Caco-2 (cell line): ENCODE measurements at regions of chr1 and their contacts with region 1.

Region 1: DNA sequence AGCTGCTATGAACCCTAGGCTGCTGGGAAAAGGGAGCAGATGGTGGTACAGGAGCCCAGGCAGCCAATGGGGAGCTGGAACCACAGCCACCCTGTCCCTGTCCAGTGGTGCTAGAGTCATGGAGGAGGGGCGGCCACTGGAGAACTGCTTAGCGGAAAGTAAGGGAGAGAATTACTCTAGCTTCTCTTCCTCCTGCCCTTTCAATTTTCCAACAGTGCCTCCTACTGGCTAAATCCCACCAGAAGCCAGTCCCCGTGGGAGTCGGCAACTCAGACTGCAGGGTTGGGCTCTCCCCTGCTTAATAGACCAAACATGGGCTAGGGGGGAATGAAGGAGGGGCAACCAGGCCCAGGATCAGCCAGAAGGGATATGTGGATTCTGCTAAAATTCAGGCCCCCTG is 154.5 kb downstream of the ACTL8 start:
- DNase-seq: no peak
- H3K4me3 ChIP-seq: no peak overlapping the region
- H3K4me3 Mint-ChIP-seq: no peak overlapping the region
- H3K27ac Mint-ChIP-seq: no peak overlapping the region
- H3K4me1 ChIP-seq: no peaks in the 10 kb centered on the region
- H3K4me1 Mint-ChIP-seq: no peaks in the 10 kb centered on the region
- H3K27me3 ChIP-seq: no peaks in the 10 kb centered on the region
- H3K27me3 Mint-ChIP-seq: peaks cover 14% of the 10 kb centered on the region
- CTCF ChIP-seq: no peak

Region 2: DNA sequence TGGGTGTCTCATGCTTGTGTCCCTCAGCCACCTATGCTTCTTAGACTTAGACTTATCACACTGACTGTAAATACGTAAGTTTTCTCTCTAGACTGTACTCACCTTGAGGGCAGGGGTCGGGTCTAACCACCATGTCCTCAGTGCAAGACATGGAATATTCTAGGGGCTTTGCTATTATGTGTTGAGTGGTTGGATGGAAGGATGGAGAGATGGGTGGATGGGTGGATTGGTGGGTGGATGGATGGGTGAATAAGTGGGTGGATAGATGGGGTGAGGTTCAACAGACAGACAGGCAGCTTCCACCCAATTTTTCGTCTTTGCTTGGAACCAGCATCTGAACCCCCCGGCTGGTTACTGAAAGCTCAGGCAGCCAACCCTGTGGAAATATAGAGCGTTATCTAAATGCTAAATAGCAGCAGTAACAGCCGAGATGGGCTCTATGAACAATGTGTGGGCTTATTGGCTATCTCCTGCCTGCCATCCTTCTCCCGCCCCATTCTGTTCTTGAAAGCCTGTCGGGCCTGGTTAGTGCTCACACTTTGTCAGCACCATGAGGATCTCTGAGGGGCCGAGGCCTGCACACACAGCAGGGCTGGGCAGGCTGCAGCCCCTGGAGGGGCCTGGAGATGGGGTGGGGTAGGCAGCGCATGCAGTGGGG is 23.8 kb before region 1 on chr1:
- CTCF ChIA-PET with region 1: interaction called, 11 read pairs
- POLR2A ChIA-PET with region 1: no interaction called
- intact Hi-C with region 1: no loop called
- DNase-seq: no peak
- H3K4me3 ChIP-seq: no peak overlapping the region
- H3K4me3 Mint-ChIP-seq: no peak overlapping the region
- H3K27ac Mint-ChIP-seq: no peak overlapping the region
- H3K4me1 ChIP-seq: no peaks in the 10 kb centered on the region
- H3K4me1 Mint-ChIP-seq: no peaks in the 10 kb centered on the region
- H3K27me3 ChIP-seq: no peaks in the 10 kb centered on the region
- H3K27me3 Mint-ChIP-seq: peaks cover 21% of the 10 kb centered on the region
- CTCF ChIP-seq: no peak

Region 3: GRCh38 chr1:17895986-17896385 is 13.6 kb before region 1 on chr1:
- CTCF ChIA-PET with region 1: no interaction called
- POLR2A ChIA-PET with region 1: no interaction called
- intact Hi-C with region 1: no loop called
- DNase-seq: no peak
- H3K4me3 ChIP-seq: no peak overlapping the region
- H3K4me3 Mint-ChIP-seq: no peak overlapping the region
- H3K27ac Mint-ChIP-seq: no peak overlapping the region
- H3K4me1 ChIP-seq: no peaks in the 10 kb centered on the region
- H3K4me1 Mint-ChIP-seq: no peaks in the 10 kb centered on the region
- H3K27me3 ChIP-seq: no peaks in the 10 kb centered on the region
- H3K27me3 Mint-ChIP-seq: peaks cover 20% of the 10 kb centered on the region
- CTCF ChIP-seq: no peak

Region 4: GRCh38 chr1:17933971-17934370 is 24.3 kb after region 1 on chr1:
- CTCF ChIA-PET with region 1: no interaction called
- POLR2A ChIA-PET with region 1: no interaction called
- intact Hi-C with region 1: no loop called
- DNase-seq: no peak
- H3K4me3 ChIP-seq: no peak overlapping the region
- H3K4me3 Mint-ChIP-seq: no peak overlapping the region
- H3K27ac Mint-ChIP-seq: no peak overlapping the region
- H3K4me1 ChIP-seq: 0 out of 2 replicates have a peak, but pooled peaks cover 8% of the 10 kb centered on the region
- H3K4me1 Mint-ChIP-seq: peaks cover 13% of the 10 kb centered on the region
- H3K27me3 ChIP-seq: no peaks in the 10 kb centered on the region
- H3K27me3 Mint-ChIP-seq: peaks cover 5% of the 10 kb centered on the region
- CTCF ChIP-seq: no peak

Region 5: DNA sequence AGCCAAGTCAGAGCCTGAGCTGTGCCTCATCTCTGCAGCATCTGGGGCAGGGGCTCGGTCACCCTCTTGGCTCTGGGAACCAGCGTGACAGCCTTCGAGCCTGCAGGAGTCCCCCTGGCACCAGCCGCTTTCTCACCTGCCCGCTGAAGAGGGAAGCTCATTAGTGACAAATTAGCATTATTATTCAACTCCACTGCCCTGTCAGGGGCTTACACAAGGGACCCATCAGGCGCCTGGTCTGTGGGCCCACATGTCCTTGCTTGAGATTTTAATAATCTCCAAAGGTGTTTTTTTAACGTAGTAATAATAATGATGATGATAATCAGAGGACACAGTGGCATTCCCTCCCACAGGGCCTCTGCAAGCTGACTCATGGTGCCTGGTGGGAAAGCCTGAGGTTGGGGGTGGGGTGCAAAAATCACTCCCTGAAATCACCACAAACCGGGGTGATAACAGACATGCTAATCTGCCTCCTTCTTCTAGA is 99.9 kb after region 1 on chr1:
- CTCF ChIA-PET with region 1: no interaction called
- POLR2A ChIA-PET with region 1: no interaction called
- intact Hi-C with region 1: no loop called
- DNase-seq: no peak
- H3K4me3 ChIP-seq: no peak overlapping the region
- H3K4me3 Mint-ChIP-seq: no peak overlapping the region
- H3K27ac Mint-ChIP-seq: no peak overlapping the region
- H3K4me1 ChIP-seq: no peaks in the 10 kb centered on the region
- H3K4me1 Mint-ChIP-seq: no peaks in the 10 kb centered on the region
- H3K27me3 ChIP-seq: peaks cover 1% of the 10 kb centered on the region; the same call in 1 of the 2 replicates
- H3K27me3 Mint-ChIP-seq: peaks cover 8% of the 10 kb centered on the region
- CTCF ChIP-seq: no peak